IMR-90 (cell line): ENCODE measurements at regions of chr4 and their contacts with region 1.

Region 1: GRCh38 chr4:21802406-21802805 is 146.2 kb downstream of the KCNIP4 start:
- DNase-seq: no peak
- ATAC-seq: peak; percentile 24; the same call in 1 of the 2 replicates
- H3K4me3 ChIP-seq: no peak overlapping the region
- H3K27ac ChIP-seq: no peak overlapping the region
- H3K4me1 ChIP-seq: no peaks in the 10 kb centered on the region
- H3K27me3 ChIP-seq: no peaks in the 10 kb centered on the region
- CTCF ChIP-seq: no peak
- POLR2A ChIP-seq: no peak
- RAD21 ChIP-seq: no peak

Region 2: DNA sequence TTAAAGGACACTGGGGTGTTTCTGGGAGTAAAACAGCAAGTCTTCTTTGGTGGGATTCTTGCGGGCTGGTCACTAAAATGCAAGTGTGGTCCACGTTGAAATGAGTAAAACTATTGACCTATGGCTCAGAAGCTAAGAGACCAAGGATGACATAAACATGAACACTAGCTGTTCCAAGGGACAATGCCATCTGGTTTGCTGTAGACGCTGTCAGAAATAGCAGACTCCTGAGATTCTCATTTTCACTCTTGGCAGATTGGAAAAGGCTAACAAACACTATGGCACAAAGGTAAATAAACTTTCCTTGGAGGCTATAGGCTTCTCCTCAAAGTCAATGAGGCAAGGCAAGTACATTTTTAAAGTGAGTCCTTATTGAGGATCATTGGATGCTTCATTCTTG is 197.4 kb before region 1 on chr4:
- CTCF ChIA-PET with region 1: no interaction called
- POLR2A ChIA-PET with region 1: no interaction called
- dilution Hi-C with region 1: no loop called
- in situ Hi-C with region 1: no loop called
- intact Hi-C with region 1: no loop called
- DNase-seq: no peak
- ATAC-seq: no peak
- H3K4me3 ChIP-seq: no peak overlapping the region
- H3K27ac ChIP-seq: no peak overlapping the region
- H3K4me1 ChIP-seq: no peaks in the 10 kb centered on the region
- H3K27me3 ChIP-seq: no peaks in the 10 kb centered on the region
- CTCF ChIP-seq: no peak
- POLR2A ChIP-seq: no peak
- RAD21 ChIP-seq: no peak

Region 3: DNA sequence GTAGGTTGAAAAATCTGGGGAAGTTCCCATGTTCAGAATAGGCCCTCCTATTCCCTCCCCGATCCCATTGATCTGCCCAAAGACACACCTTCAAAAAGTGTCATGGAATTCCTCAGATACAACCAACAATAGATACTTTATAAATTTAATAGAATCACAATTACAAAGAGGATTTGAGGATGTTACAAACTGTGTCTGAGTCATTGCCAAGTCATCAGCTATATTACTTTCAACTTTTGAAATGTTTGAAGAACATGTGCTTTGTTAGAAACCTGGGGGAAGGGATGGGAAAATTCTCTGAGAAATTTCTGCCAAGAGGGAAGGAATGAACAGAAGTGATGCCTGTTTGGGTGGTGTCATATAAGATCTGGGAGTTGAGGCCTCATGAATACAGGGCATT is 99.4 kb after region 1 on chr4:
- CTCF ChIA-PET with region 1: no interaction called
- POLR2A ChIA-PET with region 1: no interaction called
- dilution Hi-C with region 1: no loop called
- in situ Hi-C with region 1: loop called (anchors 25 kb)
- intact Hi-C with region 1: no loop called
- DNase-seq: peak; percentile 62
- ATAC-seq: peak; percentile 11; the same call in 1 of the 2 replicates
- H3K4me3 ChIP-seq: no peak overlapping the region
- H3K27ac ChIP-seq: no peak overlapping the region
- H3K4me1 ChIP-seq: no peaks in the 10 kb centered on the region
- H3K27me3 ChIP-seq: no peaks in the 10 kb centered on the region
- CTCF ChIP-seq: no peak
- POLR2A ChIP-seq: no peak
- RAD21 ChIP-seq: no peak

Region 4: GRCh38 chr4:22237155-22237751 is 434.8 kb after region 1 on chr4:
- CTCF ChIA-PET with region 1: no interaction called
- POLR2A ChIA-PET with region 1: no interaction called
- dilution Hi-C with region 1: no loop called
- in situ Hi-C with region 1: no loop called
- intact Hi-C with region 1: no loop called
- DNase-seq: peak; percentile 13
- ATAC-seq: no peak
- H3K4me3 ChIP-seq: no peak overlapping the region
- H3K27ac ChIP-seq: no peak overlapping the region
- H3K4me1 ChIP-seq: no peaks in the 10 kb centered on the region
- H3K27me3 ChIP-seq: no peaks in the 10 kb centered on the region; the same call in 1 of the 2 replicates
- CTCF ChIP-seq: peak; percentile 42
- POLR2A ChIP-seq: no peak
- RAD21 ChIP-seq: peak; percentile 43; the same call in 1 of the 2 replicates

Region 5: DNA sequence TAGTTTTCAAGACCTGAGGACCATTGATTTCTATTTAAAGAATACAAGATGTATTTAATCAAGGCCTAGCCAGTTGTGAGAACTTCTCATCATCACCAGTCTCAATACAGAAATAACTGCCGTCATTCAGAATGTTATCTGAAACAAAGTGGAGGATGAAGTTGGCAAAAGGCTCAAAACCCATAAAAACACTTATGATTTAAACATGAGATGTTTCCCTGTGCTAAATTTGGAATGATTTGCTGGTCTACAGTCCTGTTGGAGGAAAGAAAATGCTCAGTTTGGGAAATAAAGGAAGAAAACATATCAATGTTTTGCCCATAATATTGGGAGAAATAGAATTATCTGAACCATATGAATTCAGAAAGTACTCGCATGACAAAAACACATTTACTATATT is 521.3 kb after region 1 on chr4:
- CTCF ChIA-PET with region 1: no interaction called
- POLR2A ChIA-PET with region 1: interaction called, 10 read pairs
- dilution Hi-C with region 1: no loop called
- in situ Hi-C with region 1: no loop called
- intact Hi-C with region 1: no loop called
- DNase-seq: no peak
- ATAC-seq: no peak
- H3K4me3 ChIP-seq: no peak overlapping the region
- H3K27ac ChIP-seq: no peak overlapping the region
- H3K4me1 ChIP-seq: no peaks in the 10 kb centered on the region
- H3K27me3 ChIP-seq: no peaks in the 10 kb centered on the region
- CTCF ChIP-seq: no peak
- POLR2A ChIP-seq: no peak
- RAD21 ChIP-seq: no peak

Region 6: DNA sequence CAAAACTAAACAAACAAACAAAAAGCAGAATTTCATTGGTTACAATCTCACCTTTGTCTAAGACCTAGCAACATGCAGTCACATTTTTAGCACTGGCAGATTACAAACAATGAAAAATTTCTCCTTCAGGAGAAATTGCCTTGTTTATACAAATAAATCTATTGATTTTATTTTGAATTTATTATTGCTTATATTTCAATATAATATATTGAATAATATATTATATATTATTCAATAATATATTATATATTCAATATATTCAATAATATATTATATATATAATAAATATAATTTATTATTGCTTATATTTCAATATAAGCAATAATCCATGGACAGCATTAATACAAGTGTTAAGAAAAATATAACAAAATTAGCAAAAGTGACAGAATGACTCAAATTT is 581.7 kb after region 1 on chr4:
- CTCF ChIA-PET with region 1: interaction called, 5 read pairs
- POLR2A ChIA-PET with region 1: interaction called, 16 read pairs
- dilution Hi-C with region 1: no loop called
- in situ Hi-C with region 1: no loop called
- intact Hi-C with region 1: no loop called
- DNase-seq: no peak
- ATAC-seq: no peak
- H3K4me3 ChIP-seq: no peak overlapping the region
- H3K27ac ChIP-seq: no peak overlapping the region
- H3K4me1 ChIP-seq: no peaks in the 10 kb centered on the region; the same call in 1 of the 2 replicates
- H3K27me3 ChIP-seq: no peaks in the 10 kb centered on the region
- CTCF ChIP-seq: no peak
- POLR2A ChIP-seq: no peak
- RAD21 ChIP-seq: no peak